RWPE1 (cell line): ENCODE measurements at regions of chr15 and their contacts with region 1.

Region 1: DNA sequence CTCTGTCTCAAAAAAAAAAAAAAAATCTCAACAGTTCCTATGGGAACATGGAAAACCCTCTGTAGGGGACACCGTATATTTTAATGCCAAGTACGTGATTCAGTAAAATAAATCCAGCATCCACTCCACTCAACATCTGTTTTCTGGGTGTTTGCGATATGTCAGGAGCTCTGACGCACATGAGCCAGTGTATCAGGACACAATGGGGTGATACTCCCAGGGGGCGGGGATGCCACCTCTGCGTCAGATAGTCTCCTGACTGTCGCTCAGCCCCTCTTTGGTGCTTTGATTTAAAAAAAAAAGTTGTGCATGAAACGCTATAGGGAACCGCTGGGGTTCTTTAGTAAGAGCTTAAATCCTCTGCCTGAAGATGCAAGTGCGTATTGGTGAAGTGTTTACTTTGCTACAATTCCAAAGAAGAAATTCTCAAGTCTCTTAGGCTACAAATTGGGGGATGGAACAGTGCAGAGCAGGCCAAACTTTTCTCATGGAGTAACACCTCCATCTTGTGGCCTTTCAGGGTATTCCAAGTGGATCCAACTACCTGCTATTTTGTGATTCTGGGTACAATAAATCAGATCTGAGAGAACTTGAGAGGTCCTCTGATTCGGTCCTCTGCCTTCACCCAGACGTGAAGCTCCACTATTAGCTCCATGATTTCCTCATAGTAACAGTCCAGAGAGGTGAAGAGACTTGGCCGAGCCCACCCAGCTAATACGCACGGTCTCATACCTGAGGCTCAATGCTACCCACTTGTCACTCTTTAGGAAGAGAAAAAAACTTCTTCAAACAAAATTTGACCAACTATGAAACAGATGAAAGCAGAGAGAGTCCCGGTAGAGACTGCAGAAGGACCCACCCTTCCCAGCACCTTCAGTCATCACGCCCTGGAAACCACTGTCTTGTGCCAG is 9.3 kb upstream of the NR2E3 start:
- DNase-seq: peak; percentile 75
- H3K27ac ChIP-seq: no peak overlapping the region
- CTCF ChIP-seq: peak; percentile 90

Region 2: GRCh38 chr15:71465131-71465530 is 336.0 kb before region 1 on chr15:
- CTCF ChIA-PET with region 1: no interaction called
- POLR2A ChIA-PET with region 1: no interaction called
- DNase-seq: no peak
- H3K27ac ChIP-seq: no peak overlapping the region
- CTCF ChIP-seq: no peak

Region 3: DNA sequence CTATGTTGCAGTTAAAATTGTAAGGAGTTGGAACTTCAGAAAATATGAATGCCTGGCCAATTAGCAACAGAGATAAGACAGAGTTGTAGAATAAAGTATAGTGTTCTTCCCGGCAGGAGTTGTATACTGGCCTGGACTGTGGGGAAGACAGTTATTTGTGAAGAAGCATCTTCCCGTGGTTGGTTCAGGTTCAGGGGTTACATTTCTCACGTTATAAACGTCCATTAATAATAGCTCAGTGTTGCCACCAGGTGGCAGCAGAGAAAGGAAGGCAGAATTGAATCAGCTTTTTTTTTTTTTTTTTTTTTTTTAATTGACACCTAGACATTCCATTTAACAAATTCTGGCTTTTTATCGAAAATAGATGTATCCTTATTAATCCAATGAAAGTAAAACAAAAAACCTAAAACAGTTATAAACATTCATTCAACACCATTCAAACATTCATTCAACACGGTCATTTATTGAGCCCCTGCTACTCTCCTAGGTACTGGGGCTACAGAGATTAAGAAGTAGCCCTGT is 57.2 kb before region 1 on chr15:
- CTCF ChIA-PET with region 1: interaction called, 10 read pairs
- POLR2A ChIA-PET with region 1: no interaction called
- DNase-seq: peak; percentile 55
- H3K27ac ChIP-seq: no peak overlapping the region
- CTCF ChIP-seq: peak; percentile 91

Region 4: DNA sequence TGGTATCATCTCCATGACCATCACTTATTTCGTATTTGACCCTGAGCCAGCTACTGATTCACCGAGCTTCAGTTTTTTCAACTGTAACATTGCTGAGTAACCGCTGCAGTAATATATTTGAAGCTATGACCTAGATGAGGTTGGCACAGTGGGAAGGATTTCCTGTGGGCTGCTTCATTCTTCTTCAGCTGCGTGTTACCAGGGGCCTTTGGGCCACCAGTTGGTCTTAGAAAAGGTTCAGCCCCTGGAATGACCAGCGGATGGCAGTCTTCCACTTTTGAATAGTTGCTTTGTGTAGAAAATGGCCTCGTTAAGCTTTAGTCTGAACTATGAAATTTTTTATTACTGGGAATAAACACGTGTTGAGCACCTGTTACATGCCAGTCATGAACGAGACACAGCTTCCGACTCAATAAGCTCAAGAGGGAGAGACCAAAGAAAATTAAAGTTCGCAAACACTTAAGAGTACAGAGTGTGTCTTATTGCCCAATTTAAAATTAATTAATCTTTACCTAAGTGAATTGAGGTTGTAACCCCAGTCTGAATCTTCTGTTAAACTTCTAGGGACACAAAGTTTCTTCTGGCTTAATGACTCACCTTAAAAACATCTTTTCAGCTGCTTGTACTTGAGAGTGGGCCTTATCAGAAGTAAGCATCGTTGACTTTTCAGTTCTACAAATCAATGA is 48.3 kb before region 1 on chr15:
- CTCF ChIA-PET with region 1: interaction called, 10 read pairs
- POLR2A ChIA-PET with region 1: no interaction called
- DNase-seq: peak; percentile 67
- H3K27ac ChIP-seq: no peak overlapping the region
- CTCF ChIP-seq: peak; percentile 16; the same call in 1 of the 2 replicates

Region 5: DNA sequence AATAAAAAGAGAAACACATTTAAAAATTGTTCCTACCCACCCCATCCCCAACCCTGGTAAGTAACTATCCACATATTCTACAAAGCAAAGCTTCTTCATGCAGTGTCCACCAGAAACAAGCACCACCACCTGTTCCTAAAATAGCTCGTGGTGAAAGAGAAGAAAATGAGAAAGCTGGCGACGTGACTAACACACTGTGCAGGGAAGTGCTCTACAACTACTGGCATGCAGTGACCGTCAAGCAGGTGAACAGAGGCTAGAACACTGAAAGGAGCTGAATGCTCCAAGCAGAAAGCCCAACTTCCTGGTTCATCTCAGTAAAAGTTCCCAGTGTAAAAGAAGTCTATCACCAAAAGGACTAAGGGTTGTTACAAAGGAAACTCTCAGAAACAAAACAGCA is 89.9 kb after region 1 on chr15:
- CTCF ChIA-PET with region 1: no interaction called
- POLR2A ChIA-PET with region 1: no interaction called
- DNase-seq: no peak
- H3K27ac ChIP-seq: no peak overlapping the region
- CTCF ChIP-seq: no peak